ENCODE measurements at regions of chr6 and their contacts with region 1.

Region 1: GRCh38 chr6:149082286-149082707 is 235.2 kb upstream of the TAB2 start:
- DNase-seq: no peak
- ATAC-seq: peak; percentile 91
- H3K4me3 ChIP-seq: no peak overlapping the region
- H3K27ac ChIP-seq: no peak overlapping the region
- H3K4me1 ChIP-seq: peaks cover 33% of the 10 kb centered on the region
- H3K27me3 ChIP-seq: no peaks in the 10 kb centered on the region
- CTCF ChIP-seq: peak; percentile 77 to 88 (median 79)
- EP300 ChIP-seq: no peak
- POLR2A ChIP-seq: no peak
- RAD21 ChIP-seq: peak; percentile 94

Region 2: GRCh38 chr6:149007846-149008245 is 74.5 kb before region 1 on chr6:
- CTCF ChIA-PET with region 1: no interaction called
- POLR2A ChIA-PET with region 1: no interaction called
- RAD21 ChIA-PET with region 1: no interaction called
- SMC1A ChIA-PET with region 1: no interaction called
- in situ Hi-C with region 1: no loop called
- intact Hi-C with region 1: no loop called
- DNase-seq: no peak
- ATAC-seq: no peak
- H3K4me3 ChIP-seq: no peak overlapping the region
- H3K27ac ChIP-seq: no peak overlapping the region
- H3K4me1 ChIP-seq: no peaks in the 10 kb centered on the region
- H3K27me3 ChIP-seq: no peaks in the 10 kb centered on the region
- CTCF ChIP-seq: no peak
- EP300 ChIP-seq: no peak
- POLR2A ChIP-seq: no peak
- RAD21 ChIP-seq: no peak

Region 3: GRCh38 chr6:149054559-149055194 is 27.6 kb before region 1 on chr6:
- CTCF ChIA-PET with region 1: interaction called, 5 read pairs
- POLR2A ChIA-PET with region 1: interaction called, 4 read pairs
- RAD21 ChIA-PET with region 1: interaction called, 16 read pairs
- SMC1A ChIA-PET with region 1: interaction called, 69 read pairs
- in situ Hi-C with region 1: no loop called
- intact Hi-C with region 1: loop called (anchors 1 kb)
- DNase-seq: peak; percentile 86
- ATAC-seq: peak; percentile 85
- H3K4me3 ChIP-seq: peak overlapping the region; percentile 53; the same call in 1 of the 2 replicates
- H3K27ac ChIP-seq: peak overlapping the region; percentile 90
- H3K4me1 ChIP-seq: peaks cover 37% of the 10 kb centered on the region
- H3K27me3 ChIP-seq: no peaks in the 10 kb centered on the region
- CTCF ChIP-seq: no peak
- EP300 ChIP-seq: no peak
- POLR2A ChIP-seq: no peak
- RAD21 ChIP-seq: no peak

Region 4: DNA sequence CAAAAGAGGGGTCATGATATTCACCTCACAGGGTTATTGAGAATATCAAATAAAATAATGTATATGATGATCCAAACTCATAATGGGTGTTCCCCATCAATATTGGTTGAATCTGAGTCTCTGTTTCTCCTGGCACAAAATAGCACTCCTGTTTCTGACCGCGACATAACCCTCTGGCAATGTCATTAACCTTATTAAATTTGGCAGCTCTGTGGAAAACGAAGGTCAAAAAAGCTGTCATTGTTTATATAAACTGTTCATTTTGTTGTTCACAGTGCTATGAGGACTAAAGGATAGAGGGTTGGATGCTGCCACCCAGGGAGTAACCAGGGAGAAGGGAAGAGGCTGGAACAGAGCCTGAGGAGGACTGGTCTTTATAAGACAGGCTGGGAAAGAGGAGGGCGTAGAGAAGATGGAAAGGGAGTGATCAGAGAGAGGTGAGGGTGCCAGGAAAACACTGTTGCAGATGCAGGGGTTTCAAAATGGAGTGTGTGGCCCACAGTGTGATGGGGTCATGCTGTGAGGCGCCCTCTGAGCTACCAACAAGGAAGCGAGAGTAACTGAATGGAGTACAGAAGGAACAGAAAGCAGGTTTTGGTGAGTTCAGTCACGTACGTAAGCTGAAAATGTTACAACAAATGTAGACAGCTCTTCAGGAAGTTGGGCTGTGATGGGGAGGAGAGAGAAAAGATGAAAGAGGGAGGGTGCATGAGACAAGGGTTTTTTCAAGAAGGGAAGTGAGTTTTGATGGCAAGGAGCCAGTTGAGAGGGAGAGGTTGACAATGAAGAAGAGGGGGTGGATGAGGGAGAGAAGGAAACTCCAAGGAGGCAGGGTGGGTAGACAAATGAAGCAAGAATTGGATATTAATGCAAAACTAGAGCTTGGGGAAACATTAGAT is 16.4 kb before region 1 on chr6:
- CTCF ChIA-PET with region 1: interaction called, 31 read pairs
- POLR2A ChIA-PET with region 1: interaction called, 33 read pairs
- RAD21 ChIA-PET with region 1: interaction called, 56 read pairs
- SMC1A ChIA-PET with region 1: interaction called, 88 read pairs
- in situ Hi-C with region 1: no loop called
- intact Hi-C with region 1: no loop called
- DNase-seq: peak; percentile 99
- ATAC-seq: peak; percentile 95
- H3K4me3 ChIP-seq: no peak overlapping the region; the same call in 1 of the 2 replicates
- H3K27ac ChIP-seq: peak overlapping the region; percentile 95
- H3K4me1 ChIP-seq: peaks cover 42% of the 10 kb centered on the region
- H3K27me3 ChIP-seq: no peaks in the 10 kb centered on the region
- CTCF ChIP-seq: no peak
- EP300 ChIP-seq: peak; percentile 91 to 97; a peak in 3 of 4 replicates
- POLR2A ChIP-seq: peak; percentile 76
- RAD21 ChIP-seq: no peak; the same call in 1 of the 2 replicates

Region 5: DNA sequence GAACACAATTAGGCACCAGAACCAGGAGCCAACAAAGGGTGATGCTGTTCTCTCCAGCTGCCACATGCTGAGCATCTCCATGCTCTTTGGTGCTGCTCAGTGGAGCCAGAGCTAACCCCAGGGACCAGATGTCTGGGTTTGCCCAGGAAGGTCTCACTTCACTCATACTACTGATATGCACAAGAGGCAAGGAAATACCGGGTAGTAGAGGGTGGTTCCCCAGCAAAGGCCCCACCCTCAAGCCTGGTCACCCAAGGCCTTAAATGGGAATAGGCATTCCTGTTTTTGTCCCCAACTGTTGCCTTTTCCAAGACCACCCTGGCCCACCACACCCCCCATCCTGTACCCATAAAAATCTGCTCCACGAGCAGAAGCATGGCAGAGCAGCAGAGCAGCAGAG is 30.7 kb after region 1 on chr6:
- CTCF ChIA-PET with region 1: interaction called, 18 read pairs
- POLR2A ChIA-PET with region 1: interaction called, 3 read pairs
- RAD21 ChIA-PET with region 1: interaction called, 20 read pairs
- SMC1A ChIA-PET with region 1: interaction called, 27 read pairs
- in situ Hi-C with region 1: no loop called
- intact Hi-C with region 1: no loop called
- DNase-seq: no peak
- ATAC-seq: peak; percentile 82
- H3K4me3 ChIP-seq: no peak overlapping the region
- H3K27ac ChIP-seq: peak overlapping the region; percentile 74
- H3K4me1 ChIP-seq: peaks cover 50% of the 10 kb centered on the region
- H3K27me3 ChIP-seq: no peaks in the 10 kb centered on the region
- CTCF ChIP-seq: no peak
- EP300 ChIP-seq: no peak
- POLR2A ChIP-seq: no peak
- RAD21 ChIP-seq: no peak

Region 6: GRCh38 chr6:149190224-149190831 is 108.0 kb after region 1 on chr6:
- CTCF ChIA-PET with region 1: interaction called, 6 read pairs
- POLR2A ChIA-PET with region 1: no interaction called
- RAD21 ChIA-PET with region 1: interaction called, 11 read pairs
- SMC1A ChIA-PET with region 1: interaction called, 7 read pairs
- in situ Hi-C with region 1: no loop called
- intact Hi-C with region 1: no loop called
- DNase-seq: no peak
- ATAC-seq: peak; percentile 95
- H3K4me3 ChIP-seq: no peak overlapping the region
- H3K27ac ChIP-seq: no peak overlapping the region
- H3K4me1 ChIP-seq: peaks cover 5% of the 10 kb centered on the region
- H3K27me3 ChIP-seq: no peaks in the 10 kb centered on the region
- CTCF ChIP-seq: peak; percentile 39 to 57 (median 51)
- EP300 ChIP-seq: no peak
- POLR2A ChIP-seq: no peak
- RAD21 ChIP-seq: peak; percentile 61

Region 7: GRCh38 chr6:149203509-149203908 is 121.2 kb after region 1 on chr6:
- CTCF ChIA-PET with region 1: no interaction called
- POLR2A ChIA-PET with region 1: no interaction called
- RAD21 ChIA-PET with region 1: no interaction called
- SMC1A ChIA-PET with region 1: no interaction called
- in situ Hi-C with region 1: no loop called
- intact Hi-C with region 1: no loop called
- DNase-seq: no peak
- ATAC-seq: no peak
- H3K4me3 ChIP-seq: no peak overlapping the region
- H3K27ac ChIP-seq: no peak overlapping the region
- H3K4me1 ChIP-seq: no peaks in the 10 kb centered on the region
- H3K27me3 ChIP-seq: no peaks in the 10 kb centered on the region
- CTCF ChIP-seq: no peak
- EP300 ChIP-seq: no peak
- POLR2A ChIP-seq: no peak
- RAD21 ChIP-seq: no peak

Region 8: DNA sequence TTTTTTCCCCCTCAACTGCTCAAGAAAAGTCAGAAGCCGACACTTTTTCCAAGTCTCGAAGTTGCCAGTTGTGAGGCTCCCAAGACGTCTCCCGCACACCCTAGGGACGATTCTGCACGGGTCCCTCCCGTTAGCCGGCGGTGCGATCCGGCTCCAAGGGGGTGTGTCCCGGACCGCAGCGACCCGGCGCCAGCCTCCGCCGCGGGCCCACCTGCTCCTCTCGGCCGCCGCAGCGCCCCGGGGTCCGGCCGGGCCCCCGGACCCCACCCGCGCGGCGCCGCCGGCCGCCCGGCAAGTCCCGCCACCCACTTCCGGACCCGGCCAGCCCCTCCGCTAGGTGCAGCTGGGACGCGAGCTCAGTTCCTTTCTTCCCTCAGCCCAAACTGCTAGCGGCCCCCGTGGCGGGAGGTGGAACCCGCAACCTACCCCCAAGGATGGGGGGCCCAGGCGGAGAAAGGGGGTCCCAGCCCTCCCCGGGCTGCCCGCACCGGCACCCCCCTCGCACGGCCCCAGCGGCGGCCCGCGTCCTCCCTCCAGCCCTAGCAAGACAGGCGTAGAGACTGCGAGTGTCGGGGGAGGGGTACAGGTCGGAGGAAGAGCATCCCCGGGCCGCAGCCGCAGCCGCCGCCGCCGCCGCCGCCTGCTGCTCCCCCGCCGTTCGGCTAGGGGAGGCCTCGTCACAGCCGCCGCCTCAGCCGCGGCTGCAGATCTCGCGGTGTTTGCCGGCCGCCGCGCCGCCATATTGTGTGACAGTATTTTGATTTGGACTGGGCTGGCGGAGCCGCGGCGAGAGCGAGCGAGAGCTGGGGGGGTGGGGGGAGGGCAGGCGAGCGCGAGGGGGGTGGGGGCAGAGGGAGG is 234.7 kb after region 1 on chr6:
- CTCF ChIA-PET with region 1: interaction called, 3 read pairs
- POLR2A ChIA-PET with region 1: interaction called, 5 read pairs
- RAD21 ChIA-PET with region 1: interaction called, 4 read pairs
- SMC1A ChIA-PET with region 1: interaction called, 3 read pairs
- in situ Hi-C with region 1: no loop called
- intact Hi-C with region 1: loop called (anchors 1 kb)
- DNase-seq: peak; percentile 57
- ATAC-seq: peak; percentile 79
- H3K4me3 ChIP-seq: peak overlapping the region; percentile 97
- H3K27ac ChIP-seq: peak overlapping the region; percentile 96
- H3K4me1 ChIP-seq: peaks cover 3% of the 10 kb centered on the region; the same call in 1 of the 2 replicates
- H3K27me3 ChIP-seq: no peaks in the 10 kb centered on the region
- CTCF ChIP-seq: 0 out of 6 replicates have a peak, but pooled peaks of 1 of the 3 experiments have one; percentile 2
- EP300 ChIP-seq: no peak
- POLR2A ChIP-seq: peak; percentile 86
- RAD21 ChIP-seq: 0 out of 2 replicates have a peak, but pooled peaks have one; percentile 28